HepG2 (cell line): ENCODE measurements at regions of chr13 and their contacts with region 1.

Region 1: GRCh38 chr13:21476893-21477472 is 17.9 kb upstream of the ZDHHC20 start:
- DNase-seq: peak; percentile 64
- ATAC-seq: peak; percentile 88
- H3K4me3 ChIP-seq: peak overlapping the region; percentile 49 to 81 (median 77)
- H3K27ac ChIP-seq: no peak overlapping the region
- H3K4me1 ChIP-seq: peaks cover 20% of the 10 kb centered on the region; the same call in 1 of the 2 replicates
- H3K27me3 ChIP-seq: peaks cover 0 to 2% of the 10 kb centered on the region in 2 experiments; a peak in 1 of 5 replicates
- CTCF ChIP-seq: peak; percentile 92
- EP300 ChIP-seq: no peak
- POLR2A ChIP-seq: no peak
- RAD21 ChIP-seq: peak; percentile 75

Region 2: DNA sequence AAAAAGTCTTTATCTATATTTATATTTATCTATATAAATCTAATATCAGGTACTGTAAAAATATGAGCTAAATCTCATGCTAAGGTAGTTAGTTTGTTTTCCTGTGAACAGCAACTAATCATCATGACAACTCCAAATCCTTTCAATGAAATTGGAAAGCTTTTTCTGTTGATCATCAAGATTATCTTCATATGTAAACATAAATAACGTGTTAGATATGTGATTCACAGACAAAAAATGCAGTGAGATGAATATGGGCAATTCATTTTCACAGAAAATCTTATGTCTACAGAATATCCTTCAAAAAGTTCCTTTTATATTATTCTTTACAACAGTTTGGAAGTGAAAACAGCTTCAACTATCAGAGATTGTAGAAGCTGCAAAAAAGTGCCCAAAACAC is 661.5 kb before region 1 on chr13:
- CTCF ChIA-PET with region 1: no interaction called
- POLR2A ChIA-PET with region 1: no interaction called
- in situ Hi-C with region 1: no loop called
- intact Hi-C with region 1: no loop called
- DNase-seq: no peak
- ATAC-seq: no peak
- H3K4me3 ChIP-seq: no peak overlapping the region
- H3K27ac ChIP-seq: no peak overlapping the region
- H3K4me1 ChIP-seq: no peaks in the 10 kb centered on the region
- H3K27me3 ChIP-seq: no peaks in the 10 kb centered on the region
- CTCF ChIP-seq: no peak
- EP300 ChIP-seq: no peak
- POLR2A ChIP-seq: no peak
- RAD21 ChIP-seq: no peak

Region 3: GRCh38 chr13:21022056-21022979 is 454.7 kb before region 1 on chr13:
- CTCF ChIA-PET with region 1: no interaction called
- POLR2A ChIA-PET with region 1: no interaction called
- in situ Hi-C with region 1: no loop called
- intact Hi-C with region 1: loop called (anchors 2 kb)
- DNase-seq: peak; percentile 80
- ATAC-seq: peak; percentile 79
- H3K4me3 ChIP-seq: peak overlapping the region in 1 of 3 experiments; percentile 30; a peak in 2 of 6 replicates
- H3K27ac ChIP-seq: peak overlapping the region; percentile 41
- H3K4me1 ChIP-seq: peaks cover 43% of the 10 kb centered on the region
- H3K27me3 ChIP-seq: no peaks in the 10 kb centered on the region
- CTCF ChIP-seq: no peak
- EP300 ChIP-seq: peak in 1 of 2 experiments; percentile 47; a peak in 1 of 4 replicates
- POLR2A ChIP-seq: no peak
- RAD21 ChIP-seq: no peak

Region 4: DNA sequence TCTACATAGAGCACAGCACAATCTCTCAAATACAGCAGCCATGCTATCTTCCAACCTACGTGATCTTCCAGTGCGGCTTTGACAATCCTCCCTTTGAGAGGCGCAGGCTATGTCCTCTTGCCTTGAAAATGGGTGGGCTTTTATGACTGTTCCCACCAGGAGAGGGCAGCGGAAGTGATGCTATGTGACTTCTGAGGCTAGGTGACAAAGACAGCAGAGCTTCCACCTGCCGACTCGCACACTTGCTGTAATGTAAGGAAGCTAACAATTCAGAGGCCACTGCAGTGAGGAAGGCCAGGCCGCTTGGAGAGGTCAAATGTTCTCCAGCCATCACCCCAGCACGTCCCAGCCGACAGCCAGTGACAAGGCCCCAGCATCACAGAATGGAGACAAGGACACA is 234.7 kb before region 1 on chr13:
- CTCF ChIA-PET with region 1: no interaction called
- POLR2A ChIA-PET with region 1: no interaction called
- in situ Hi-C with region 1: no loop called
- intact Hi-C with region 1: loop called (anchors 1 kb)
- DNase-seq: peak; percentile 16
- ATAC-seq: peak; percentile 62
- H3K4me3 ChIP-seq: no peak overlapping the region
- H3K27ac ChIP-seq: no peak overlapping the region
- H3K4me1 ChIP-seq: no peaks in the 10 kb centered on the region
- H3K27me3 ChIP-seq: no peaks in the 10 kb centered on the region; a peak in 1 of 5 replicates
- CTCF ChIP-seq: peak; percentile 46
- EP300 ChIP-seq: no peak
- POLR2A ChIP-seq: no peak
- RAD21 ChIP-seq: no peak

Region 5: GRCh38 chr13:21338156-21338555 is 138.8 kb before region 1 on chr13:
- CTCF ChIA-PET with region 1: interaction called, 11 read pairs
- POLR2A ChIA-PET with region 1: no interaction called
- in situ Hi-C with region 1: loop called (anchors 5 kb)
- intact Hi-C with region 1: loop called (anchors 1 kb)
- DNase-seq: peak; percentile 50
- ATAC-seq: peak; percentile 87
- H3K4me3 ChIP-seq: no peak overlapping the region
- H3K27ac ChIP-seq: no peak overlapping the region
- H3K4me1 ChIP-seq: 0 out of 2 replicates have a peak, but pooled peaks cover 7% of the 10 kb centered on the region
- H3K27me3 ChIP-seq: no peaks in the 10 kb centered on the region
- CTCF ChIP-seq: peak; percentile 59
- EP300 ChIP-seq: no peak
- POLR2A ChIP-seq: no peak
- RAD21 ChIP-seq: peak; percentile 19; the same call in 1 of the 2 replicates

Region 6: DNA sequence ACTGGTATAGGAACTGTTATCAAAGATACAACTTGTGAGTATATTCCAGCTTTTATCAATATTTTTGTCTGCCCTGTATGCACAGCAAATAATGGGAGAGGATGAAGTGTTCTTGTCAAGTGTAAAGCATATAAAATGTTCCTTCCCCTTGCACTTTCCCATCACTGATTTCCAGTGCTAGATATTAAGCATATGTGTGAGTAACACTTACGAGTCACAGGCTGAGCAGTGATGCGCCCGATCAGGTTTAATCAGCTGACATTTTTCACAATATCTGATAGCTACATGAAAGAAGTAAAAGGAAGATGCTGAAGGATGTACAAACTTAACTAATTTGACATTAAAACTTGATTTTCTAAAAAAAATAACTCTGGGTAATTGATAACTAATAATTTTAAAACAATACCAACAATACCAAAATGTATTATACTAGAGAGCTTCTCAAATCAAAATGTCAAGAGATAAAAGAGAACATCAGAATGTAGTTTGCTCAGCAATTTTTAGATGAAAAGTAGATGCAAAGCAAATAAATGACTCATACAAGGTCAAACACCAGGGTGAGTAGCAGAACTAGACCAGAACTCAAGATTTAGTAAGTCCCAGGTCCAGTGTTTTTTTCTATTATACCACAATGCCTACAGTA is 74.3 kb before region 1 on chr13:
- CTCF ChIA-PET with region 1: no interaction called
- POLR2A ChIA-PET with region 1: no interaction called
- in situ Hi-C with region 1: no loop called
- intact Hi-C with region 1: loop called (anchors 5 kb)
- DNase-seq: peak; percentile 67
- ATAC-seq: peak; percentile 61; the same call in 2 of the 3 replicates
- H3K4me3 ChIP-seq: no peak overlapping the region
- H3K27ac ChIP-seq: no peak overlapping the region
- H3K4me1 ChIP-seq: peaks cover 20% of the 10 kb centered on the region
- H3K27me3 ChIP-seq: no peaks in the 10 kb centered on the region
- CTCF ChIP-seq: no peak
- EP300 ChIP-seq: no peak; a peak in 1 of 4 replicates
- POLR2A ChIP-seq: no peak
- RAD21 ChIP-seq: no peak

Region 7: GRCh38 chr13:21579754-21580316 is 102.9 kb after region 1 on chr13:
- CTCF ChIA-PET with region 1: no interaction called
- POLR2A ChIA-PET with region 1: no interaction called
- in situ Hi-C with region 1: no loop called
- intact Hi-C with region 1: no loop called
- DNase-seq: no peak
- ATAC-seq: no peak
- H3K4me3 ChIP-seq: no peak overlapping the region
- H3K27ac ChIP-seq: no peak overlapping the region
- H3K4me1 ChIP-seq: 0 out of 2 replicates have a peak, but pooled peaks cover 6% of the 10 kb centered on the region
- H3K27me3 ChIP-seq: no peaks in the 10 kb centered on the region
- CTCF ChIP-seq: no peak
- EP300 ChIP-seq: no peak
- POLR2A ChIP-seq: no peak
- RAD21 ChIP-seq: no peak

Region 8: DNA sequence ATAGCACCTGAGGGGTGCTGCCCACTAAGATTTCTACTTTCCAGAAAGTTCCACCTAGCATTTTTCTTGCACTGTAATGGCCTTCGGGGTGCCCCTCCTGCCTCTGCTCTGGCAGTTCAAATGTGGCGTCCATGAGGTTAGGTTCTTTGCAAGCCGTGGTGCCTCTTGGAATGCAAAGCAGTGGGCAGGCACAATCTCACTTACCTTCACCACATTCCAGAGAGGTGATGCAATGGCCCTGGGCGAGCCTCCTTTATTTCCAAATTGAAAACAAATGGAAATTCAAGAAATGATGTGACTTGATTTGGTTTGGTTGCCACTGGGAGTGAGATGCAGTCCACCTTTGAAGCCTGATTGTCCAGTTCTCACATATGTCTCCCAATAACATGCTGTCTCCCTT is 240.8 kb after region 1 on chr13:
- CTCF ChIA-PET with region 1: no interaction called
- POLR2A ChIA-PET with region 1: no interaction called
- in situ Hi-C with region 1: no loop called
- intact Hi-C with region 1: no loop called
- DNase-seq: no peak
- ATAC-seq: no peak
- H3K4me3 ChIP-seq: no peak overlapping the region
- H3K27ac ChIP-seq: no peak overlapping the region
- H3K4me1 ChIP-seq: peaks cover 12% of the 10 kb centered on the region
- H3K27me3 ChIP-seq: peaks cover 0 to 4% of the 10 kb centered on the region in 2 experiments; a peak in 3 of 5 replicates
- CTCF ChIP-seq: no peak
- EP300 ChIP-seq: no peak
- POLR2A ChIP-seq: no peak
- RAD21 ChIP-seq: no peak